ENCODE measurements at regions of chr7 and their contacts with region 1.

Region 1: GRCh38 chr7:82044497-82045080 is 274.7 kb upstream of the HGF start:
- DNase-seq: peak; percentile 54
- ATAC-seq: 0 out of 2 replicates have a peak, but pooled peaks have one; percentile 58
- H3K4me3 ChIP-seq: no peak overlapping the region
- H3K27ac ChIP-seq: no peak overlapping the region
- H3K4me1 ChIP-seq: peaks cover 3% of the 10 kb centered on the region; the same call in 1 of the 2 replicates
- H3K27me3 ChIP-seq: no peaks in the 10 kb centered on the region
- CTCF ChIP-seq: peak; percentile 64; the same call in 1 of the 2 replicates

Region 2: DNA sequence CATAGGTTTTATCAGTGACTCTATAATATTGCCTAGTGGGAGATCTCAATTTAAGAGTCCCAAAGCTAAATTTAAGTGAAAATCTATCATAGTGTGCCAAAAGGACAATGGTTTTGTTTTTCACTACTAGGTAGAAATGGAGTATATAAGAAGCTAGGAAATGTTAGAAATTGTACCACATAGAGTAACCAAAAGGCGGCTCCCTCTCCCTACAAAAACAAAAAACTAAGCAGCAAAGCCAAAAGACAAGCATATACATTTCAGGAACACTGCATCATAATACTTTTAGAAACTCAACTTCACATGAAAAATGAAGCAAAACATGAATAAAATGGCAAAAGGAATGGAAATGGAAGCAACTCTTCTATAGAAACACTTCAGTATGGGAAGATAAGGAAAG is 127.4 kb after region 1 on chr7:
- CTCF ChIA-PET with region 1: no interaction called
- POLR2A ChIA-PET with region 1: no interaction called
- in situ Hi-C with region 1: no loop called
- intact Hi-C with region 1: loop called (anchors 10 kb)
- DNase-seq: no peak
- ATAC-seq: no peak
- H3K4me3 ChIP-seq: no peak overlapping the region
- H3K27ac ChIP-seq: no peak overlapping the region
- H3K4me1 ChIP-seq: no peaks in the 10 kb centered on the region
- H3K27me3 ChIP-seq: no peaks in the 10 kb centered on the region
- CTCF ChIP-seq: peak; percentile 39; the same call in 1 of the 2 replicates

Region 3: DNA sequence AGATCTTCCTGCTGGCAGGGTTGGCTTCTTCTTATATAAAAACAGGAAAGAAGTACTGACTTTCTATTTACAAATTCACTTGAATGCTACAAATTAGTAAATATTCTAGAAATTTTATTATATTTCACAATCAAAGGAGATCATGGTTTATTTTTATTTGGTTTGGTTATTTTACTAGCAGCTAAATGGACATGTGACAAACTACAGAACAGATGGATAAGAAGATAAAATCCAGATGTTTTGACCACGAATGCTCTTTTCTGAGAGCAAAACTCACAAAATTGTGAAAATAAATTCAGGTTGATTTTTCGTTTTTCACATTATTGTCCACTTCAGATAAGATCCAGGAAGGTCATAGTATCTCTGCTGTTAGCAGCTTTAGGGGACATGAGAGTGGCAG is 343.5 kb after region 1 on chr7:
- CTCF ChIA-PET with region 1: no interaction called
- POLR2A ChIA-PET with region 1: no interaction called
- in situ Hi-C with region 1: no loop called
- intact Hi-C with region 1: no loop called
- DNase-seq: no peak
- ATAC-seq: no peak
- H3K4me3 ChIP-seq: no peak overlapping the region
- H3K27ac ChIP-seq: no peak overlapping the region
- H3K4me1 ChIP-seq: no peaks in the 10 kb centered on the region
- H3K27me3 ChIP-seq: no peaks in the 10 kb centered on the region
- CTCF ChIP-seq: no peak

Region 4: DNA sequence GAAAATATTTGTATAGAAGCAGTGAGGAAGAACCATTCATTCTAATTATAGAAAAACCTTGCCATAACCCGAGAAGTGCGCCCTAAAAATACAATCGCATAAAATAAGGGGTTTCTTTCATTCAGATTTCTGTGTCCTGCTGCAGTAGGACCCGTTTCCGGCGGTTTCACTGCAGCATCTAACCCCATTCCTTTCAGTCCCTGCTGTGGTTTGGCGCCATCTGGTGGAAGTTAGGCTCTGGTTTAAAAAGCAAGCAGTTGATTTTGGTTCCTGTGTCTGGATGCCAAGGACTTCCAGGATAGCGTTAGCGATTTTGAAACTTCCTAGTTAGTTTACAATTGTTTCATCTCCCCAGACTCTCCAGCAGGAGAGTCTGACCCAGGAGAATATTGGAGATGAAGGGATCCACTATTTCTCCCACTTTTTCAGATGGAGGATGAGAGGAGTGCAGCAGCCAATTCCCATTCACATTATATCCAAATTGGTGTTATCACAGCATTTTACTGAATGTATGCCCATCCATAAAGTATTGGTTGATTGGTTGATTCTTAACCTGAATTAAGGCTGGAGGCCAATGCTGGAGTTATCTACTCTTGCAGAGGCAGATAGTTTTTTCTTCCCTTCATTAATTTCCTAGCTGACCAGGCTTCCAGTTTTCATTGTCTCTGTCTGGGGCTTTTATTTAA is 527.7 kb after region 1 on chr7:
- CTCF ChIA-PET with region 1: no interaction called
- POLR2A ChIA-PET with region 1: no interaction called
- in situ Hi-C with region 1: no loop called
- intact Hi-C with region 1: loop called (anchors 1 kb)
- DNase-seq: peak; percentile 80
- ATAC-seq: peak; percentile 96
- H3K4me3 ChIP-seq: peak overlapping the region in 1 of 2 experiments; percentile 25; a peak in 2 of 4 replicates
- H3K27ac ChIP-seq: no peak overlapping the region
- H3K4me1 ChIP-seq: no peaks in the 10 kb centered on the region
- H3K27me3 ChIP-seq: no peaks in the 10 kb centered on the region
- CTCF ChIP-seq: peak; percentile 93

Region 5: DNA sequence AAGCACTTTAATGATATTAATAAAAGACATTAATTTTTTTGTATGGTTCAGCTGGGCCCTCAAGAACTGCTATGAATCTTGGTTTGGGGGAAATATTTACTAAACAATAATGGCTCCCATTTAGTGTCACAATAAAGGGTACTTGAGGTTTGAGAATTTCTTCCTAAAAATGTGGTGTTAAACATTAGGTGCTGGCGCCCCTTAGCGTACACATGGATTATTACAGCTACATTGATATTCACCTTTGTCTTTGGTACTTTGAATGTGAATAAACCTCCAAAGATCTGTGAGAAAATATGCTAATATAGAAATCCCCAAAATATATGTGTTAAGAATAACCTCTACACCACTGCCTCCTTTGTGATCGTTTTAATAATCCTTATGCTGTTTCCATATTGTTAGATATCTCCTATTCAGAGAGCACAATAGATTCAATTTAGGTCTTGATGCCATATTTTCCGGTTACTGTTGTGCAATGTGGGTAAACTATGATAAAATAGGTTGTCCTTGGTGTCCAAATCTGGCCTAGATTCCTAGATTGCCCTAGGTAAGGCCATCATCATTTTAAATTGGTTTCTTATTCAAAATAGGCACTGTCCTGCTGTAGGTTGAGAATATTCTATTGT is 560.8 kb after region 1 on chr7:
- CTCF ChIA-PET with region 1: no interaction called
- POLR2A ChIA-PET with region 1: no interaction called
- in situ Hi-C with region 1: no loop called
- intact Hi-C with region 1: loop called (anchors 10 kb)
- DNase-seq: no peak
- ATAC-seq: no peak
- H3K4me3 ChIP-seq: no peak overlapping the region
- H3K27ac ChIP-seq: no peak overlapping the region
- H3K4me1 ChIP-seq: no peaks in the 10 kb centered on the region
- H3K27me3 ChIP-seq: no peaks in the 10 kb centered on the region
- CTCF ChIP-seq: peak; percentile 79

Region 6: GRCh38 chr7:82729172-82730030 is 684.8 kb after region 1 on chr7:
- CTCF ChIA-PET with region 1: no interaction called
- POLR2A ChIA-PET with region 1: no interaction called
- in situ Hi-C with region 1: no loop called
- intact Hi-C with region 1: loop called (anchors 1 kb)
- DNase-seq: peak; percentile 33
- ATAC-seq: no peak
- H3K4me3 ChIP-seq: no peak overlapping the region
- H3K27ac ChIP-seq: no peak overlapping the region
- H3K4me1 ChIP-seq: no peaks in the 10 kb centered on the region
- H3K27me3 ChIP-seq: no peaks in the 10 kb centered on the region
- CTCF ChIP-seq: peak; percentile 75; the same call in 1 of the 2 replicates

Region 7: GRCh38 chr7:83593921-83594475 is 1549.4 kb after region 1 on chr7:
- CTCF ChIA-PET with region 1: no interaction called
- POLR2A ChIA-PET with region 1: no interaction called
- in situ Hi-C with region 1: no loop called
- intact Hi-C with region 1: no loop called
- DNase-seq: no peak
- ATAC-seq: no peak
- H3K4me3 ChIP-seq: no peak overlapping the region
- H3K27ac ChIP-seq: no peak overlapping the region
- H3K4me1 ChIP-seq: no peaks in the 10 kb centered on the region
- H3K27me3 ChIP-seq: no peaks in the 10 kb centered on the region
- CTCF ChIP-seq: no peak

Measured in Panc1 (cell line).